ENCODE measurements at regions of chr3 and their contacts with region 1.

Region 1: GRCh38 chr3:138909904-138910303 is 37.0 kb downstream of the FOXL2 start:
- DNase-seq: no peak
- H3K4me3 ChIP-seq: no peak overlapping the region
- H3K27ac ChIP-seq: no peak overlapping the region
- H3K4me1 ChIP-seq: peaks cover 0 to 5% (median 2%) of the 10 kb centered on the region in 4 donors
- H3K27me3 ChIP-seq: no peaks in the 10 kb centered on the region
- CTCF ChIP-seq: no peak
- EP300 ChIP-seq: no peak
- POLR2A ChIP-seq: no peak

Region 2: DNA sequence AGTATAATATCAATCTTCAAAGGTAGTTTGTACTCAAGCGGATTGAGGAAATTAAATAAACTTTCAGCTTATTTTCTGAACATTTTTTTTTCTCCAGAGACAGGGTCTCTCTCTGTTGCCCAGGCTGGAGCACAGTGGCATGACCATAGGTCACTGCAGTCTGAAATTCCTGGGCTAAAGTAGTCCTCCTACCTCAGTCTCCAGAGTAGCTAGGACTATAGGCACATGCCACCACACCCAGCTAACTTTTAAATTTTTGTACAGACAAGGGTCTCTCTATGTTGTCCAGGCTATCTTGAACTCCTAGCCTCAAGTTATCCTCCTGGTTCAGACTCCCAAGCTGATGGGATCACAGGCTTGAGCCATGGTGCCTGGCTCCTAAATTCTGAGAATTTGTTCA is 204.2 kb before region 1 on chr3:
- intact Hi-C with region 1: loop called (anchors 10 kb)
- DNase-seq: no peak
- H3K4me3 ChIP-seq: no peak overlapping the region
- H3K27ac ChIP-seq: no peak overlapping the region
- H3K4me1 ChIP-seq: no peaks in the 10 kb centered on the region
- H3K27me3 ChIP-seq: no peaks in the 10 kb centered on the region
- CTCF ChIP-seq: no peak
- EP300 ChIP-seq: no peak
- POLR2A ChIP-seq: no peak

Measured in stomach (tissue), 19 donors.